Activated B cell treated with CpG ODN at 0.5 μM for 24 hours (primary cell): ENCODE measurements at regions of chr11 and their contacts with region 1.

Region 1: DNA sequence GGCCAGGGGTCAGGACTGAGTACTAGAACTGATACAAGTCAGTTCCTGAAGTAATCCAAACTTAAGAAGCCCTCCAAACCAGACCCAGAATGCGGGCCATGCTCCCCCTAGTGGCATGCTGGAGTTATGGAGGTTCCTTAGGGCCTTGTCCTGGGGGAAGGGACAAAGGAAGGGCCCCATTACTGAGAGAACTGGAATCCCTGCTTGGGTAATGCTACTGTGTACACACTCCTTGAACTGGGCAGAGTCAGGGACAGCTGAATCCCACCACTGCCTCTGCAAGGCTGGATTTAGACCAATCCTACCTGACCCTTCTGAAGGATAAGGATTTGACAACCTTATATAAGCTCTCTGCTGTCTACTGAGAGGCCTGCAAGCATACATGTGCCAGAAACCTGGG is 97.3 kb upstream of the AKIP1 start:
- DNase-seq: peak; percentile 29
- ATAC-seq: peak; percentile 77
- H3K4me3 Mint-ChIP-seq: no peak overlapping the region
- H3K27ac Mint-ChIP-seq: no peak overlapping the region
- H3K4me1 Mint-ChIP-seq: peaks cover 10% of the 10 kb centered on the region
- H3K27me3 Mint-ChIP-seq: peaks cover 10% of the 10 kb centered on the region
- CTCF ChIP-seq: peak; percentile 23

Region 2: GRCh38 chr11:8593935-8594909 is 219.4 kb before region 1 on chr11 and contains the start of gene STK33:
- CTCF ChIA-PET with region 1: no interaction called
- POLR2A ChIA-PET with region 1: no interaction called
- intact Hi-C with region 1: loop called (anchors 10 kb)
- DNase-seq: peak; percentile 52
- ATAC-seq: peak; percentile 92
- H3K4me3 Mint-ChIP-seq: peak within 1 kb of the TSS; percentile 88
- H3K27ac Mint-ChIP-seq: peak within 1 kb of the TSS; percentile 50
- H3K4me1 Mint-ChIP-seq: peaks cover 17% of the 10 kb centered on the region
- H3K27me3 Mint-ChIP-seq: peaks cover 11% of the 10 kb centered on the region
- CTCF ChIP-seq: no peak
- total RNA-seq, gene STK33: 11.4 and 14.0 TPM in 2 replicates

Region 3: DNA sequence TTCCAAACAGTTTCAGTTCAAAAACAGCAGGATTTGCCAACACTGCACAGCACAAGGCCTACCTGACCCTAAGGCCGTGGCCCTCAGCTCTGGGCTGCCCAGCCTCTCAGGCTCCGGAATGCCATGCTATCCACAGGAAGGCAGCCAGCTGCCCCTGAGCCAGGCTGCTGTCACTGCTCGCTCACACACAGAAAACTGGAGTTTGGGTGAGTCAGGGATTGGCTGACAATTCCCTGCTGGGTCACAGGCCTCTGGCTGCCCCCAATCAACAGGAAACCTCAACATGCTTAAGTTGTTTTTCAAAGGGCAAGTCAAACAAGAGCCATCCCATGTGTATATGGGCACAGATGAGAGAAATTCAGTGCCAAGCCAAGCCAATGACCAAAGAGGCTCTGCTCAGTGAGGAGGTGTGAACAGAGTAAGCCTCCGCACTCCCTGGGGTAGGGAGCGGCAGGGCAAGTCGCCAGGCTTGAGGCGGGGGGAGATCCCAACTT is 80.9 kb before region 1 on chr11:
- CTCF ChIA-PET with region 1: no interaction called
- POLR2A ChIA-PET with region 1: no interaction called
- intact Hi-C with region 1: loop called (anchors 5 kb)
- DNase-seq: no peak
- ATAC-seq: peak; percentile 18
- H3K4me3 Mint-ChIP-seq: peak overlapping the region; percentile 69
- H3K27ac Mint-ChIP-seq: peak overlapping the region; percentile 90
- H3K4me1 Mint-ChIP-seq: peaks cover 34% of the 10 kb centered on the region
- H3K27me3 Mint-ChIP-seq: no peaks in the 10 kb centered on the region
- CTCF ChIP-seq: no peak

Region 4: DNA sequence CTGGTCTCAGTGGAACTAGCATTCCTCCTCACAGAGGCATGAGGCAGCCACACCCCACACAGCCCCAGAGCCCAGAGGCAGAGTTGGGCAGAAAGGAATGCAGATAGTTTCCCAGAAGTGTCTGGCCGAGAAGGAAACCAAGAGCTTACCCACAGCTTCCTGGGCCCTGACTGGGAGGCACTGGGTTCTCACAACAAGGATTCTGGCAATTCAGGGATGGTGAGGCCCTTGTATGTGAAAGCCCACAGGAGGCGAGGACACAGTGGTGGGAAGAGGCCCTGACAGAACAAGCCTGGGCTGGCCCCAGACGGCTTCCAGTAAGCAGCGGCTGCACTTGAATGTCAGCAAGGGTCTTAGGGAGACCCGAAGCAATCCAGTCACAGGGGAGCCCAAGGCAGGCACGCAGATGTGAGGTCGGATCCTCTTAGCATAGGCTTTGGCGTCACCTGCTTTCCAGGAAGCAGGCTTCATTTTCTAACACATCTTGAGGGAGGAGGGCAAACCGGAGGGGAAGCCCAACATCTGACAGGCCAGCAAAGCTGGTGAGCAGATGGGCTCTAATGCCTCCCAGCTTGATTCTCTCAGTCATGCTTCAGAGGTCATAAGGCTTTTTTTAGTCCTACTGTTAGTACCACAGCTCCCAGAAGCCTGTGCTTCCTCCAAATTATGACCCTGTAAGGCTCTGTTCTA is 19.1 kb after region 1 on chr11:
- CTCF ChIA-PET with region 1: no interaction called
- POLR2A ChIA-PET with region 1: interaction called, 4 read pairs
- intact Hi-C with region 1: loop called (anchors 2 kb)
- DNase-seq: peak; percentile 22
- ATAC-seq: peak; percentile 96
- H3K4me3 Mint-ChIP-seq: no peak overlapping the region
- H3K27ac Mint-ChIP-seq: peak overlapping the region; percentile 74
- H3K4me1 Mint-ChIP-seq: peaks cover 16% of the 10 kb centered on the region
- H3K27me3 Mint-ChIP-seq: no peaks in the 10 kb centered on the region
- CTCF ChIP-seq: no peak

Region 5: GRCh38 chr11:8886322-8886721 is 72.7 kb after region 1 on chr11:
- CTCF ChIA-PET with region 1: no interaction called
- POLR2A ChIA-PET with region 1: no interaction called
- intact Hi-C with region 1: no loop called
- DNase-seq: no peak
- ATAC-seq: no peak
- H3K4me3 Mint-ChIP-seq: no peak overlapping the region
- H3K27ac Mint-ChIP-seq: no peak overlapping the region
- H3K4me1 Mint-ChIP-seq: no peaks in the 10 kb centered on the region
- H3K27me3 Mint-ChIP-seq: peaks cover 32% of the 10 kb centered on the region
- CTCF ChIP-seq: no peak

Region 6: DNA sequence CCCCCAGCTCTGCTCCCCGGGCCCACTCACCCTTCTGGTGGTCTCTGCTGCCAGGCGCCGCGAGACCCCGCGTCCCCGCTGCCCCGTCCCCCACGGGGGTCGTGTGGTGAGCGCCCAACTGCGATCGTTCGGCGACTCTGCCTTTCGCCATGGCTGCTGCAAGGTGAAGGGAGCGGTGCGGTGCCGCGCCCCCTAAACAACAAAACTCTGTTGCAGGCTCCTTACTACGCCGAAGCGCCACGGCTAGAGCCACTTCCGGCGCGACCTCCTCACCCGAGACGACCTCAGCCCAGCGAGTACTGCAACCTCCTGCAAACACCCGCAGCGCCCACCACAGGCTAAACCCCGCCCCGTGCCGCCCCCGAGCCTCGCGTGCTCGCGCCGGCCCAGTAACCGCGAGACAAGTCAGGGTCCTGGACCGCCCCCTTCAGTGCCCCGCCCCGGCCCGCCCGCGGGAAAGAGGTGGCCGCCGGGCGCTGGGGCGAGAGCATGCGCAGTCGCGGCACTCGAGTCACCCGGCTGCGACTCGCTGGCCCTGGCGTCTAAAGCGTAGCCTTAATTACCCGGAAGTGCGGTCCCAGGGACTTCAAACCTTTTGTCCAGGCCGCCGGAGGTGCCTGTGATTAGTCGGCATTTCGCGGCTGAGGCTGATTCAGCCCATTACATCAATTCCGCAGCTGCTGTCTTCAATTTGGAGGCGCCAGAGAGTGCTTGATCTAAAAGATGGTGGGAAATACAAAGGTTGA is 500.8 kb after region 1 on chr11 and contains the start of gene TMEM41B:
- CTCF ChIA-PET with region 1: no interaction called
- POLR2A ChIA-PET with region 1: no interaction called
- intact Hi-C with region 1: no loop called
- DNase-seq: peak; percentile 100
- ATAC-seq: peak; percentile 96
- H3K4me3 Mint-ChIP-seq: peak within 1 kb of the TSS; percentile 98
- H3K27ac Mint-ChIP-seq: peak within 1 kb of the TSS; percentile 95
- H3K4me1 Mint-ChIP-seq: peaks cover 49% of the 10 kb centered on the region
- H3K27me3 Mint-ChIP-seq: peaks cover 4% of the 10 kb centered on the region
- CTCF ChIP-seq: no peak
- total RNA-seq, gene TMEM41B: 19.4 and 21.7 TPM in 2 replicates